Activated CD8-positive, alpha-beta T cell treated with anti-CD3 and anti-CD28 coated beads, Interleukin-2, amount 10 ng/mL, durations not matched to agents 7 days and 5 days (primary cell): ENCODE measurements at regions of chr7 and their contacts with region 1.

Region 1: GRCh38 chr7:100132697-100133151 is 6.0 kb downstream of the MBLAC1 start:
- DNase-seq: peak; percentile 79
- ATAC-seq: peak; percentile 78
- H3K4me3 Mint-ChIP-seq: no peak overlapping the region
- H3K27ac Mint-ChIP-seq: no peak overlapping the region
- H3K4me1 Mint-ChIP-seq: peaks cover 30% of the 10 kb centered on the region
- H3K27me3 Mint-ChIP-seq: no peaks in the 10 kb centered on the region

Region 2: DNA sequence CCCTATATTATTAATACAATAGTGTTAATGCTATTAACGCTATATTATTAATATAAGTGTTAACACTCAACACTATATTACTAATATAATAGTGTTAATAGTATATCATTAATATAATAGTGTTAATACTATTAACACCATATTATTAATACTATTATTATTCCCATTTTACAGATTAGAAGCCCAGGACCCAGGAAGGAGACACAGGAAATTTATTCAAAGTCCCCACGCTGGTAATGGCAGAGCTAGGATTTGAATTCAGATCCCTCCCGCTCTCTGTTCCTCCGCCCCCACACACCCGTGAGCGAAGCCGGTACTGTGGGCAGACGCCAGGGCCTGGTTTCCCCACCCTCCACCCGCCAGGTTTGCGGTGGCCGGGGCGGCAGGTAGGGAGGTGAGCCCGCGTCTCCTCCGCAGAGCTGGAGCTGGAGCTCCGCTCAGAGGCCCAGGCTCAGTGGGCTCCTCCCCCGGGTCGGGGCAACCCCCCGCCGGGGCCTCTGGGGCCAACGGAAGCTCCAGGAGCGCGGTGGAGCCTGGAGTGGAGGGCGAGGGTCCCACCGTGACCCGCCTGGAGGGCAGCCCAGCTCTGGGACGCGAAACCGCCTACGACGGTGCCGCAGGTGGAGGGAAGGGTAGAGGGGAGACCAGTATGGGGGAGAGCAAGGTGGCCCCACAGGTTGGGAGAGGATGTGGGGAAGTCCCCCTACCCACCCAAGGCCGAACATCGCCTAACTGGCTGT is 534.8 kb before region 1 on chr7 and contains the start of gene TMEM225B:
- CTCF ChIA-PET with region 1: no interaction called
- POLR2A ChIA-PET with region 1: no interaction called
- DNase-seq: peak; percentile 68
- ATAC-seq: peak; percentile 9
- H3K4me3 Mint-ChIP-seq: no peak within 1 kb of the TSS
- H3K27ac Mint-ChIP-seq: no peak within 1 kb of the TSS
- H3K4me1 Mint-ChIP-seq: peaks cover 7% of the 10 kb centered on the region
- H3K27me3 Mint-ChIP-seq: no peaks in the 10 kb centered on the region
- total RNA-seq, gene TMEM225B: 1.2 to 1.4 TPM

Region 3: GRCh38 chr7:100081535-100082102 is 51.1 kb before region 1 on chr7 and contains the start of gene ZNF3:
- CTCF ChIA-PET with region 1: interaction called, 10 read pairs
- POLR2A ChIA-PET with region 1: no interaction called
- DNase-seq: peak; percentile 99
- ATAC-seq: peak; percentile 91
- H3K4me3 Mint-ChIP-seq: peak within 1 kb of the TSS; percentile 83
- H3K27ac Mint-ChIP-seq: peak within 1 kb of the TSS; percentile 90
- H3K4me1 Mint-ChIP-seq: peaks cover 25% of the 10 kb centered on the region
- H3K27me3 Mint-ChIP-seq: peaks cover 3% of the 10 kb centered on the region
- total RNA-seq, gene ZNF3: 20.9 to 21.8 TPM

Region 4: DNA sequence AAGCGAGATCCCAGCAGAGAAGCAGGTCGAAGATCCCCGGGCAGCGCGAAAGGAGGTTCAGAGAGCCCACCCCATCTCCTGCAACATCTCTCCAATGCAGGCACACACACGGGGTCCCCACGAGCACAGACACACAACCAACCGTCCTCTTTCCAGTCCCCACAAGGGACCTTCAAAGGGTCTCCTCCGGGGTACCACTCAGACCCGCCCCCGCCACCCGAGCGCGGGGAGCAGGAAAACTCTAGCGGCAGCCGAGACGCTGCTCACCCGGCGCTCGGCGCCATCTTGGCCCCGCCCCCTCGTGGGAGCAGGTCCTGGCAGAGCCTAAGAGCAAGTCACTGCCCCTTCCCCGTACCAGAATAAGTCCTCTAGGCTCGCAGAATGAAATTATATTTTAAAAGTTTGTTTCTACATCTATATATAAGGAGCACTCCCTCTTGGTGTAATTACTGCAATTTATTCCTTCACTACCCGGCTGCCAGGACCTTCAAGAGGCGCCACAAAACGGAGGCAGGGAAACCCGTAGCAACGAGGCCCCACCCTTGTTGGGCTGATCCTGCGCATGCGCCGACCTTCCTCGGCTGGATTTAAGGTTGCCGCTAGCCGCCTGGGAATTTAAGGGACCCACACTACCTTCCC is 13.5 kb before region 1 on chr7 and contains the starts of genes CNPY4 and TAF6:
- CTCF ChIA-PET with region 1: interaction called, 11 read pairs
- POLR2A ChIA-PET with region 1: interaction called, 7 read pairs
- DNase-seq: peak; percentile 96
- ATAC-seq: peak; percentile 77
- H3K4me3 Mint-ChIP-seq: peak within 1 kb of the TSS; percentile 93
- H3K27ac Mint-ChIP-seq: peak within 1 kb of the TSS; percentile 95
- H3K4me1 Mint-ChIP-seq: peaks cover 21% of the 10 kb centered on the region
- H3K27me3 Mint-ChIP-seq: no peaks in the 10 kb centered on the region
- total RNA-seq, gene CNPY4: 32.4 to 35.5 TPM
- total RNA-seq, gene TAF6: 74.6 to 81.0 TPM

Region 5: GRCh38 chr7:100167921-100168323 is 35.2 kb after region 1 on chr7:
- CTCF ChIA-PET with region 1: interaction called, 19 read pairs
- POLR2A ChIA-PET with region 1: interaction called, 4 read pairs
- DNase-seq: no peak
- ATAC-seq: no peak
- H3K4me3 Mint-ChIP-seq: peak overlapping the region; percentile 73
- H3K27ac Mint-ChIP-seq: peak overlapping the region; percentile 79
- H3K4me1 Mint-ChIP-seq: peaks cover 77% of the 10 kb centered on the region
- H3K27me3 Mint-ChIP-seq: peaks cover 14% of the 10 kb centered on the region

Region 6: GRCh38 chr7:100208911-100209408 is 76.2 kb after region 1 on chr7:
- CTCF ChIA-PET with region 1: interaction called, 200 read pairs
- POLR2A ChIA-PET with region 1: interaction called, 5 read pairs
- DNase-seq: peak; percentile 78
- ATAC-seq: peak; percentile 88
- H3K4me3 Mint-ChIP-seq: peak overlapping the region; percentile 62
- H3K27ac Mint-ChIP-seq: peak overlapping the region; percentile 80
- H3K4me1 Mint-ChIP-seq: peaks cover 53% of the 10 kb centered on the region
- H3K27me3 Mint-ChIP-seq: no peaks in the 10 kb centered on the region

Region 7: GRCh38 chr7:100407285-100408180 is 274.8 kb after region 1 on chr7:
- CTCF ChIA-PET with region 1: interaction called, 25 read pairs
- POLR2A ChIA-PET with region 1: no interaction called
- DNase-seq: peak; percentile 66
- ATAC-seq: peak; percentile 92
- H3K4me3 Mint-ChIP-seq: no peak overlapping the region
- H3K27ac Mint-ChIP-seq: no peak overlapping the region
- H3K4me1 Mint-ChIP-seq: peaks cover 5% of the 10 kb centered on the region
- H3K27me3 Mint-ChIP-seq: peaks cover 12% of the 10 kb centered on the region